ENCODE measurements at regions of chr18 and their contacts with region 1.

Region 1: DNA sequence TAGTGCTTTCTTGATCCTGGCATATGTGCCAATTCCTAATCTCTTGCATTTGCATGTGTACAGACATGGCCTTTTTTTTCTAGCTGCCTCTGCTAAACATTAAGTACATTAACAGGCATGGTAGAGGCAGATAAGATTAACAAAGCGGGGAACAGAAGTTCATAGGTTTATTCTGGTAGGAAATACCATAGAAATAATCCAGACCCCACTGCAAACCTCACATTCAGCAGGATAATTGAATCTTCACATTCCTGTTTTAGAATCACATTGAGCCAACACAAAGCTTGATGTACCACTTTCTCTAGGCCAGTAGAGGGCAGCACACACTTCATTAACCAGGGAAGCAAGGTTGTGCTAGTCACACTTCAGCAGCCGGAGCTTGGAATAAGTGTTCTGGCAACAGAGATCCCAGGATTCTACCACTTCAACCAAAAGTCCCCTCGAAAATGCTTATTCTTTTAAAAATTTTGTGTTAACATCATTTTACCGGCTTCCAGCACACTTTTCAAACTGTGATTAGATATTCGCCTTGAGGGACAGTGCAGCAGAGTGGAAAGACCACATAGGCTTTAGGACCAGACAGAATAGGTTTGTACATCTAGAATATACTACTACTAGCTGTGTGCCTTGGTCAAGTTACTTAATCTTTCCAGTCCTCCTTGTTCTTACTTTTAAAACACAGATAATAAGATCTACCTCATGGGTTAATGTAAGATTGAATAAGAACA is 420.2 kb upstream of the CHST9 start:
- DNase-seq: no peak
- H3K4me3 ChIP-seq: no peak overlapping the region
- H3K27ac ChIP-seq: no peak overlapping the region
- H3K4me1 ChIP-seq: no peaks in the 10 kb centered on the region
- H3K27me3 ChIP-seq: no peaks in the 10 kb centered on the region
- CTCF ChIP-seq: peak in 3 of 4 experiments; percentile 46 to 71 (median 59)
- EP300 ChIP-seq: no peak
- POLR2A ChIP-seq: no peak

Region 2: DNA sequence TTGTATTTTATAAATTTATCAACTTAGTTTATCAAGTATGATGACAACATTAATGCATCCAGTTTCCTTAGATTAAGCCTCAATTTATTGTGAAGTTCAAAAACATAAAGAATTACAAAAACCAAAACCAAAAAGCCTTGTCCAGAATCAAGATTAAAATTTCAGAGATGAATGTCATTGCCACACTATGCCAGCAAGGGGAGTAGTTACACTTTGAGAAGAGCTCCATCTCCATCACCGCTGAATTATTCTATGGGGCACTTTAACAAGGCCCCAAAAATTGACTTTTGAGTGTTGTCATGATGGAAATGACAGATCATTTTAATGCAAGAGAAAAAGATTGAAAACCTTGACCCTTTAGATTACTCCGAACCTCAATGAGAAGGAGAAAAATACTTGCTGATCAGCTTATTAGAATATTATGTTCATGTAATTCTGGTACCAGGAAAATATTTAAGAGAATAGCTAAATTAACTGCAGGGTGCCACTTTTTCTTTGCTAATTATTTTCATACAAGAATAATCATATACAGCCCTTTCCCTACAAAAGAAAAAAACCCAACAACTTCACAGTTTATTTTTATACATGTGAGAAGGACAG is 587.3 kb before region 1 on chr18:
- intact Hi-C with region 1: loop called (anchors 5 kb)
- DNase-seq: no peak
- H3K4me3 ChIP-seq: no peak overlapping the region
- H3K27ac ChIP-seq: no peak overlapping the region
- H3K4me1 ChIP-seq: no peaks in the 10 kb centered on the region
- H3K27me3 ChIP-seq: no peaks in the 10 kb centered on the region
- CTCF ChIP-seq: peak in 3 of 4 experiments; percentile 29 to 50 (median 39)
- EP300 ChIP-seq: no peak
- POLR2A ChIP-seq: no peak

Region 3: DNA sequence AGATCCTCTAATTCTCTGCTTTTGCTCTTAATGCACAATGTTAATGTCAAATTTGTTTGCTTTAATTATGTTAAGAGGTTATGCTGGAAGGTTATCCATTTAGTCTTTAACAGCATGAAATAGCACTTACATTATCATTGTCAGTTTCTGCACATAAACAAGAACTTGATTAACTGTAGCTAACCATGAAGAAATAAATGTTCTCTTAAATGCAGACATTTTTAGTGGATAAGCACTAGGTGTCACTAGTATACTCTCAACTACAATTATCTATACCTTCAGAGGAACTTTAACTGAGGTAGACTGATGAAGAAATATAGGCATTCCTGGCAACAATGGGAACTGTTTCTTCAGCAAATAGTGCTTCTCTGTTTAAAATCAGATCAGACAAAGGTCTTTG is 241.4 kb before region 1 on chr18:
- intact Hi-C with region 1: loop called (anchors 5 kb)
- DNase-seq: no peak
- H3K4me3 ChIP-seq: no peak overlapping the region
- H3K27ac ChIP-seq: no peak overlapping the region
- H3K4me1 ChIP-seq: no peaks in the 10 kb centered on the region
- H3K27me3 ChIP-seq: no peaks in the 10 kb centered on the region
- CTCF ChIP-seq: no peak
- EP300 ChIP-seq: no peak
- POLR2A ChIP-seq: no peak

Region 4: GRCh38 chr18:27567434-27567833 is 37.8 kb before region 1 on chr18:
- intact Hi-C with region 1: no loop called
- DNase-seq: no peak
- H3K4me3 ChIP-seq: no peak overlapping the region
- H3K27ac ChIP-seq: no peak overlapping the region
- H3K4me1 ChIP-seq: no peaks in the 10 kb centered on the region
- H3K27me3 ChIP-seq: no peaks in the 10 kb centered on the region
- CTCF ChIP-seq: no peak
- EP300 ChIP-seq: no peak
- POLR2A ChIP-seq: no peak

Region 5: DNA sequence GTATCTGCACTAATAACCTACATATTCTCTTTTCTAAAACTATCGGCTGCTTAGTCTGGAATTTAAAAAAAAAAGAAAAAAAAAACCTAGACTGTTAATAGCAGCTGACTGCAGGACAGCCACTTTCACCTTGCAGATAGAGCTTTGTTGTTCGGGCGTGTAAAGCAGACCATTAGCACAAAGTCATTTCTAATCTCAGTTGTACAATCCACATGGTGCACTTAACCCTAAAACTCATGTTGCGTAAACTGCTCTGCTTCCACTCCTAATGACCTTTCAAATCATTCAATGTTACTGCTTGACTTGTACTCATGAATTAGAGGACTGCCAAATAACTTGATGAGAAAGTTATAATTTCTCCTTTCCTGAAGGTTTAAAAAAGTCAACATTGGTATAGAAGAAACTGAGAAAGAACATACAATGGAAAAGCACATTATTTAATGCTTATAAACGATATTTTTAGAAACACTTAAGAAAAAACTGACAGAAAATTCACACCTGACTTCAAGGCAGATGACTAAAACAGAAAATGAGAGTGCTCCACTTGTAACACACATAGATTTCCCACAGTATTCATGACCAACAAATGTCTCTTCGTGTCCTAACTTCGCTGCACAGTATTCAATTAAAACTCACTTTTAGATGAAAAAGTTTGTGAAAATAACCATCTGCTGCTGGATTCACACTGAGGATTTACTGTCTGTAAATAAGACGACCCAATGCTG is 569.1 kb after region 1 on chr18:
- intact Hi-C with region 1: no loop called
- DNase-seq: no peak
- H3K4me3 ChIP-seq: no peak overlapping the region
- H3K27ac ChIP-seq: no peak overlapping the region
- H3K4me1 ChIP-seq: peaks cover 0 to 29% (median 18%) of the 10 kb centered on the region in 4 donors
- H3K27me3 ChIP-seq: peaks cover 19 to 67% (median 31%) of the 10 kb centered on the region in 3 donors
- CTCF ChIP-seq: no peak
- EP300 ChIP-seq: no peak
- POLR2A ChIP-seq: no peak

Region 6: GRCh38 chr18:28189400-28190239 is 584.3 kb after region 1 on chr18:
- intact Hi-C with region 1: loop called (anchors 10 kb)
- DNase-seq: no peak
- H3K4me3 ChIP-seq: no peak overlapping the region
- H3K27ac ChIP-seq: no peak overlapping the region
- H3K4me1 ChIP-seq: no peaks in the 10 kb centered on the region
- H3K27me3 ChIP-seq: no peaks in the 10 kb centered on the region
- CTCF ChIP-seq: peak in 3 of 4 experiments; percentile 18 to 55 (median 37)
- EP300 ChIP-seq: no peak
- POLR2A ChIP-seq: no peak

Measured in sigmoid colon (tissue), 7 donors.